MCF 10A (cell line): ENCODE measurements at regions of chr19 and their contacts with region 1.

Region 1: GRCh38 chr19:1884719-1885334 is 469 bp downstream of the ABHD17A start:
- DNase-seq: no peak
- H3K4me3 Mint-ChIP-seq: peak overlapping the region; percentile 85
- H3K27ac Mint-ChIP-seq: peak overlapping the region; percentile 87
- H3K4me1 Mint-ChIP-seq: peaks cover 22% of the 10 kb centered on the region
- H3K27me3 Mint-ChIP-seq: no peaks in the 10 kb centered on the region
- CTCF ChIP-seq: no peak

Region 2: GRCh38 chr19:1540365-1540925 is 344.4 kb before region 1 on chr19:
- CTCF ChIA-PET with region 1: no interaction called
- POLR2A ChIA-PET with region 1: no interaction called
- intact Hi-C with region 1: no loop called
- DNase-seq: no peak
- H3K4me3 Mint-ChIP-seq: no peak overlapping the region
- H3K27ac Mint-ChIP-seq: no peak overlapping the region
- H3K4me1 Mint-ChIP-seq: no peaks in the 10 kb centered on the region
- H3K27me3 Mint-ChIP-seq: peaks cover 13% of the 10 kb centered on the region
- CTCF ChIP-seq: no peak

Region 3: DNA sequence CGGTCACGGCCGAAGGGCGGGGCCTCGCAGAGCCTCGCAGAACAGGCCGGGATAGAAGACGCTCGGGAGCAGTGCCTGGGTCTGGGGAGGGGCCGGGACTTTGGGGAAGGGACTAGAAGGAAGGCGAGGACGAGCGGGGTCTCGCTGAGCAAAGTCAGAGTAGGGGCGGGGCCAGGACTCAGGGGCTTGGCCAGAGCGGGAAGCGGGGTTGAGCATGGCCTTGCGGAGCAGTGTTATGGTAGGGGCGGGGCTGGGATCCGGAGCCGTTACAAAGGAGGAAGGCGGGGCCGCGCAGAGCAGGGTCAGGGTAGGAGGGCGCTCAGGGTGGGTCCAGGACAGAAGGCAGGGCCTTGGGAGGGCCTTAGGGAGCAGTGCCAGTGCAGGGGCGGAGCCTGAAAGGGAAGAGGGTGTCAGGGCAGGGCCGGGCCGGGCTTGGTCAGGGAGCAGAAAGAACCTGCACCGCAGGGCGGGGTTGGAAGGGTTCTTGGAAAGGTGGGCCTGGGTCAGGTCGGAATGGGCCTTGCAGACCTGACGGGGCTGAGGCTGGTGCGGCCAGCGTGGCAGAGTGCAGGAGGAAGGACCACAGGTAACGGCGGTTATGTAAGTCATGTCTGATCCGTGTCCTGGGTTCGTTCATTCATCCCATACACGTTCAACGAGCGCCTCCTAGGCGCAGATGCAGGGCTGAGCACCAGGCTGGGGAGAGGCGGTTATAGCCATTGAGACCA is 72.2 kb before region 1 on chr19:
- CTCF ChIA-PET with region 1: no interaction called
- POLR2A ChIA-PET with region 1: no interaction called
- intact Hi-C with region 1: no loop called
- DNase-seq: peak; percentile 99
- H3K4me3 Mint-ChIP-seq: peak overlapping the region; percentile 93
- H3K27ac Mint-ChIP-seq: peak overlapping the region; percentile 98
- H3K4me1 Mint-ChIP-seq: peaks cover 16% of the 10 kb centered on the region
- H3K27me3 Mint-ChIP-seq: no peaks in the 10 kb centered on the region
- CTCF ChIP-seq: peak; percentile 66

Region 4: DNA sequence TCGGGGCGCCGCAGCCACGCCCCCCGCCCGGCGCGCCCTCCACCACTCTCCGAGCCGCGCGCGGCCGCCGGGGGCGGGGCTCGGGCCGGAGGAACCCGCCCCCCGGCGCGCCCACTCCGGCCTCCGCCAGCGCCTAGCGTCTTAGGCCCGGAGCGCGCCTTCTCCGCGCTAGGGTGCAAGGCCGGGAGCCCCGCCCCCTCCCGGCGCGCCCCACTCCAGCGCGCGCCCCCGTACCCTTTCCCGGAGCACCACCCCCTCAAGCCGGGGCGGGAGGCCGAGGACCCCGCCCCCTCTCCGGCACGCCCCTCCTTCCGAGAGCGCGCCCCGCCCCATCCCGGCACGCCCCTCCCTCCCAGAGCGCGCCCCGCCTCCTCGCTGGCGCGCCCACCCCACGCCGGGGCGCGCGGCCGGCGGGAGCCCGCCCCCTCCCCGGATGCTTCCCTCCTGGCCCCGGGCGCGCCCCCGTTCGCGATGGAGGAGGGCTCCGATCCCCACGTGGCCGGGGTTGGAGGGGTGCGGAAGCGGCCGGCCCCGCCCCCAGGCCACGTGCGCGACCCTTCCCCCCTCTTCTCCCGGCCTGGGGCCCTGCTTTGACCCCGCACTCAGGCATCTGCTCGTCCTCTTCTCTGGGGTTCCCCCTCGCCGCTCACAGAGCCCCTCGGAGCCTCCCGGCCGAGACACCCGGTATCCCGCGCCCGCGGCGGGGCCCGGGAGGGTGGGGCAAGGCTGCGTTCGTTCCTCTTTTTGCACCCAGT is 20.9 kb before region 1 on chr19:
- CTCF ChIA-PET with region 1: interaction called, 4 read pairs
- POLR2A ChIA-PET with region 1: interaction called, 16 read pairs
- intact Hi-C with region 1: loop called (anchors 1 kb)
- DNase-seq: peak; percentile 96
- H3K4me3 Mint-ChIP-seq: peak overlapping the region; percentile 74
- H3K27ac Mint-ChIP-seq: peak overlapping the region; percentile 67
- H3K4me1 Mint-ChIP-seq: peaks cover 5% of the 10 kb centered on the region
- H3K27me3 Mint-ChIP-seq: no peaks in the 10 kb centered on the region
- CTCF ChIP-seq: no peak